ENCODE measurements at regions of chr5 and their contacts with region 1.

Region 1: DNA sequence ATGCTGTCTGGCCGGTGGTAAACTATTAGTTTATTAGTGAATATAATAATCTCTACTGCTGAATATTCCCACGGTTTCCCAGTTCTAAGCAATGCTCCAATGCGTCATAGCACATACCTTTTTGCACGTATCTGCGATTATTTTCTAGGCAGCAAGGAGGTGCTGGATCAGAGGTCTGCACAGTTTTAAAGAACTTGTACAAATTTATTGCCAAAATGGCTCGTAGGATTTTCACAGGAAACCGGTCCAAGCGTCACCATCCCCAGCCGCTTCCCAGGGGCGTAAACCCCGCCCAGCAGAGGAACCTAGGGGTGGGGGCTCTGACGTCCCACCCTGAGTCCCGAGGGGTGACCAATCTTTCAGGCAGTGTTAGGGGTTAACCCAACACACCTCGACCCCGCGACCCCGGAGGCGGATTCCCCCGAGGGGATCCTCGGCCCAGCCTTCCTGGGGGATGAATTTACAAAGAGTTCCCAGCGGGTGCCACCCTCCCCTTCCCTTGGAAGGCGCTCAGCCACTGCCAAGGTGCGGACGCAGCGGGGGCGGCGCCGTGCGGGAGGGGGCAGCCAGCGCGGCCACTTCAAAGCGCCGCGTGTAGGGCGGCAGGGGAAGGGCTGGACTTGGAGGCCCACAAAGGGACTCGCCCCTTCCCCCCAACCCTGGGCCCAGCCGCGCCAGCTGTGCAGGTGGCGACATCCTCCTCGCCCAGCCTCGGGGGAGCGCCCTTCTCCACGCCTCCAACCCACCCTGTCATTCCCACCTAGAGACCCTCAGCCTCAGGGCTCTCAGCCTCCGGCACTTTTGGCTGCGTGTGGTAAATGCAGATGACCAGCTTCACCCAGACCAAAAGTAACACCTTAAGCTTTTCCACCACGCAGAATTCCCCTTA is 43.5 kb upstream of the TCF7 start:
- DNase-seq: peak in 10 of 14 experiments; percentile 18 to 63 (median 46)
- ATAC-seq: peak; percentile 60
- H3K4me3 ChIP-seq: peak overlapping the region; percentile 61
- H3K4me3 Mint-ChIP-seq: peak overlapping the region; percentile 89
- H3K27ac ChIP-seq: peak overlapping the region in 1 of 2 donors; percentile 60
- H3K27ac Mint-ChIP-seq: peak overlapping the region; percentile 81
- H3K4me1 ChIP-seq: peaks cover 64% of the 10 kb centered on the region
- H3K4me1 Mint-ChIP-seq: peaks cover 74% of the 10 kb centered on the region
- H3K27me3 ChIP-seq: no peaks in the 10 kb centered on the region
- H3K27me3 Mint-ChIP-seq: no peaks in the 10 kb centered on the region
- CTCF ChIP-seq: peak; percentile 30

Region 2: GRCh38 chr5:134018154-134018985 is 52.6 kb before region 1 on chr5:
- CTCF ChIA-PET with region 1: no interaction called
- POLR2A ChIA-PET with region 1: no interaction called
- intact Hi-C with region 1: no loop called
- DNase-seq: no peak
- ATAC-seq: no peak
- H3K4me3 ChIP-seq: no peak overlapping the region
- H3K4me3 Mint-ChIP-seq: no peak overlapping the region
- H3K27ac ChIP-seq: no peak overlapping the region
- H3K27ac Mint-ChIP-seq: no peak overlapping the region
- H3K4me1 ChIP-seq: no peaks in the 10 kb centered on the region
- H3K4me1 Mint-ChIP-seq: no peaks in the 10 kb centered on the region
- H3K27me3 ChIP-seq: no peaks in the 10 kb centered on the region
- H3K27me3 Mint-ChIP-seq: no peaks in the 10 kb centered on the region
- CTCF ChIP-seq: no peak

Region 3: DNA sequence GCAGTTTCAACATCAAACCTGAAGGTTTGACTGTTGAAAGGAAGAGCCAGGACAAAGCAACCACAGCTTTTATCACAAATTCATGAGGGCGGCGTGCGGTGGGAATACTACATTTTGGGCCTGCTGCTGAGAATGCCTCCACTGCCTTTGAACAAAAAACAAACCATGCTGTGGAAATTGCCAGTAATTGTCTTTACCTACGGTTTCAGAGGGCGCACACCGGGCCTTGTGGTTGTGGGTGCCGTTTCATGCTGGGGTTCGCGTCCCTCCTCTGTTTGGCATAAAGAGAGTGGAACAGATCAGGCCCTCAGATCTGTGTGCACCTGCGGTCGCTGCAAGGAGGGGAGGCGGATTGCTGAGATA is 16.0 kb after region 1 on chr5:
- CTCF ChIA-PET with region 1: interaction called, 5 read pairs
- POLR2A ChIA-PET with region 1: interaction called, 38 read pairs
- intact Hi-C with region 1: loop called in 1 of 2 experiments (anchors 2 kb)
- DNase-seq: peak; percentile 62 to 92 (median 81)
- ATAC-seq: peak; percentile 74
- H3K4me3 ChIP-seq: no peak overlapping the region
- H3K4me3 Mint-ChIP-seq: peak overlapping the region; percentile 76
- H3K27ac ChIP-seq: peak overlapping the region; percentile 53 to 61
- H3K27ac Mint-ChIP-seq: peak overlapping the region; percentile 95
- H3K4me1 ChIP-seq: peaks cover 90% of the 10 kb centered on the region
- H3K4me1 Mint-ChIP-seq: peaks cover 88% of the 10 kb centered on the region
- H3K27me3 ChIP-seq: no peaks in the 10 kb centered on the region
- H3K27me3 Mint-ChIP-seq: no peaks in the 10 kb centered on the region
- CTCF ChIP-seq: no peak